ENCODE measurements at regions of chr7 and their contacts with region 1.

Region 1: GRCh38 chr7:129091484-129092002 is 36.6 kb upstream of the TNPO3 start:
- DNase-seq: peak; percentile 67 to 77
- ATAC-seq: peak; percentile 96 to 99
- H3K4me3 ChIP-seq: no peak overlapping the region
- H3K27ac ChIP-seq: no peak overlapping the region
- H3K4me1 ChIP-seq: no peaks in the 10 kb centered on the region
- CTCF ChIP-seq: peak; percentile 96
- EP300 ChIP-seq: no peak
- POLR2A ChIP-seq: no peak
- RAD21 ChIP-seq: peak; percentile 95 to 96

Region 2: GRCh38 chr7:128904381-128905197 is 187.0 kb before region 1 on chr7:
- CTCF ChIA-PET with region 1: interaction called, 28 read pairs
- POLR2A ChIA-PET with region 1: no interaction called
- DNase-seq: peak; percentile 56 to 60
- ATAC-seq: peak; percentile 33 to 82; a peak in 5 of 6 replicates
- H3K4me3 ChIP-seq: no peak overlapping the region
- H3K27ac ChIP-seq: no peak overlapping the region
- H3K4me1 ChIP-seq: peaks cover 16% of the 10 kb centered on the region; the same call in 1 of the 3 replicates
- CTCF ChIP-seq: peak; percentile 65
- EP300 ChIP-seq: no peak
- POLR2A ChIP-seq: no peak
- RAD21 ChIP-seq: peak; percentile 52 to 66

Region 3: DNA sequence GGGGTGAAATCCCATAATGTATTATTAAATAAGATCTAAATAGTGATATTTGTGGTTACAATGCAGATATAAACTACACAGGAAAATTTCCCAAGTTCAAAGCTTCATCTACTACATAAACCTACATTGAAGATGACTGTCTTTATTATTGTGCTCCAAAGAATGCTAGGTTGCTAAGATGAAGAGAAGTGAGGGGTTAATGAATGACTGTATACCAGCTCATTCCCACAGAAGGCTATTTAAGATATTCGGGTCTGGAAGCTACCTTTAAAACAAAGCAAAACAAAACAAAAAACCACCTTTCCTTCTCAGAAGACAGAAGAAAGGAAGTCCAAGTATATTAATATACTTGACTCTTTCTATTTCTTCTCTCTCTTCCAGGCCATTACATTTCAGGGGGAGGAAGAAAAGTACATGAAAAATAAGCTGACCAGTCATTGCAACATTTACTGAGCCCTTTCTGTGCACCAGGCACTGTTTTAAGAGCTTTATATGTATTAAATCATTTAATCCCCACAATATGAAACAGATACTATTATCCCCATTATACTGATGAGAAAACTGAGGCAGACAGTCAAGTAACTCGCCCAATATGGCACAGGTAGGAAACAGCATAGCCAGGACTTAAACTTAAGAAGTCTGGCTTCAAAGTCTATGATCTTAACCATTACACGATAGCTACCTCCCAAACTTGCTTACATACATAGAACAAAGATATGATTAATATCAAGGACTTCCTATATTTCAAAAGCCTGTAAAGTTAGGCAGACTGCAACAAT is 84.7 kb before region 1 on chr7:
- CTCF ChIA-PET with region 1: interaction called, 12 read pairs
- POLR2A ChIA-PET with region 1: no interaction called
- DNase-seq: no peak
- ATAC-seq: no peak
- H3K4me3 ChIP-seq: no peak overlapping the region
- H3K27ac ChIP-seq: no peak overlapping the region
- H3K4me1 ChIP-seq: no peaks in the 10 kb centered on the region
- CTCF ChIP-seq: no peak
- EP300 ChIP-seq: no peak
- POLR2A ChIP-seq: no peak
- RAD21 ChIP-seq: no peak

Region 4: GRCh38 chr7:129066290-129067131 is 25.0 kb before region 1 on chr7:
- CTCF ChIA-PET with region 1: interaction called, 26 read pairs
- POLR2A ChIA-PET with region 1: no interaction called
- DNase-seq: peak; percentile 26 to 43
- ATAC-seq: peak; percentile 83 to 85
- H3K4me3 ChIP-seq: no peak overlapping the region
- H3K27ac ChIP-seq: peak overlapping the region; percentile 3 to 67; a peak in 4 of 6 replicates
- H3K4me1 ChIP-seq: peaks cover 14% of the 10 kb centered on the region
- CTCF ChIP-seq: no peak
- EP300 ChIP-seq: no peak
- POLR2A ChIP-seq: no peak
- RAD21 ChIP-seq: no peak

Region 5: DNA sequence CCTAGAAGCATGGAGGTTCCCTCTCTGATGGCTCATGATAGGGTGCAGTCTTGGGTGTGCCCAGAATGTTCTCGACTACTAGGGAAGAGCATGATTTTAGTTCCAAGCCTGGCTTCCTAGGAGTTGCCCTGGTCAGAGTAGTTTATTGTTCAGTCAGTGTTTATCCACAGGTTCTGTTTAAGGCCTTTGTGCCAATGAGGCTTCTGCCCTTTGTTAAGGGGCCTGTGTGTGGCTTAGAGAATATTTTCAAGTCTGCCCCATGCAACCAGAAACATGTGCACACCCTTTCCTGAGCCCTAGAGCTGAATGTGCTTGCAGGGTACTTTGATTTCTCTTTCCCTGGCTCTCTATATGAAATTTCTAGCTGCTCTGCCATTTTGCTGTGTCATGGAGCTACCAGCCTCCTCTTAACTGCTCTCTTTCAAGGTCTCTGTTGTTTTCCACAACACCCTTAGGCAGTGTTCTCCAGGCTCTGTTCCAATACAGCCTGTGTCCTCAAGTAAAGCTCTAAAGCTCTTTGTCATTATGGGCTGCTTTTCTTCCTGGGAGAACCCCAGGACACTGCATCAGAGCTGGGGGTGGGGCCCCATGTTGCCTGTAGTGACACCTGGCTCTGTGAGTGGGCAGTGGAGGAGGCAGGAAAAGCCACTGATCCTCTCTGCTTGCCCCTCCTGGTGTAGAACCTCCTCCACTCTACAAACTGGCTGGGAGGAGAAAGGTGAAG is 18.9 kb after region 1 on chr7:
- CTCF ChIA-PET with region 1: interaction called, 54 read pairs
- POLR2A ChIA-PET with region 1: no interaction called
- DNase-seq: peak in 1 of 2 experiments; percentile 29
- ATAC-seq: peak; percentile 43 to 60; a peak in 4 of 6 replicates
- H3K4me3 ChIP-seq: no peak overlapping the region
- H3K27ac ChIP-seq: peak overlapping the region; percentile 12 to 66
- H3K4me1 ChIP-seq: peaks cover 9% of the 10 kb centered on the region
- CTCF ChIP-seq: no peak
- EP300 ChIP-seq: no peak
- POLR2A ChIP-seq: no peak
- RAD21 ChIP-seq: no peak

Region 6: DNA sequence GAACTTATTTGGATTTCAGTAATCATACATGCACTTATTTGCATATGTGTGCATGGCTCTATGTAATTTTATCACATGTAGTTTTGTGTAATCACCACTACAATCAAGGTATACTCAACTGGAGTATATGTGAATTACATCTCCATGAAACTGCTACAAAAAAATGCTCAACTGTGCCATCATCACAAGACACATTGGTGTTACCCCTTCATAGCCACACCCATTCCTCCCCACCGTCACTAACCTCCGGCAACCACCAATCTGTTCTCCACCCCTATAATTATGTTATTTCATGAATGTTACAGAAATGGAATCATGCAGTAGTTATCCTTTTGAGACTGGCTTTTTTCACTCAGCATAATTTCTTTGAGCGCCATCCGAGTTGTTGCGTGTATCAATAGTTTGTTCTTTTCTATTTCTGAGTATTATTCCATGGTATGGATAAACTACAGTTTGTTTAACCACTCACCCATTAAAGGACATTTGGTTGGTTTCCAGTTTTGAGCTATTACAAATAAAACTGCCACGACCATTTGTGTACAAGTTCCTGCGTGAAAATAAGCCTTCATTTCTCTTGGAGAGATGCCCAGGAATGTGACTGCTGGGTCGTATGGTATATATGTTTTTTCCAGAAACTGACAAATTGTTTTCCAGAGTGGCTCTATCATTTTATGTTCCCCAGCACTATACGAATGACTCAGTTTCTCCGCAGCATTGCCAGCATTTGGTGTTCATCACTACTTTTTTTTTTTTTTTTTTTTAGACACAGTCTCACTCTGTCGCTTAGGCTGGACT is 85.6 kb after region 1 on chr7:
- CTCF ChIA-PET with region 1: no interaction called
- POLR2A ChIA-PET with region 1: no interaction called
- DNase-seq: no peak
- ATAC-seq: peak; percentile 54 to 55; a peak in 4 of 6 replicates
- H3K4me3 ChIP-seq: no peak overlapping the region
- H3K27ac ChIP-seq: no peak overlapping the region
- H3K4me1 ChIP-seq: no peaks in the 10 kb centered on the region
- CTCF ChIP-seq: no peak
- EP300 ChIP-seq: no peak
- POLR2A ChIP-seq: no peak
- RAD21 ChIP-seq: no peak

Region 7: GRCh38 chr7:129240119-129240815 is 148.7 kb after region 1 on chr7:
- CTCF ChIA-PET with region 1: no interaction called
- POLR2A ChIA-PET with region 1: no interaction called
- DNase-seq: no peak
- ATAC-seq: no peak
- H3K4me3 ChIP-seq: no peak overlapping the region
- H3K27ac ChIP-seq: no peak overlapping the region
- H3K4me1 ChIP-seq: no peaks in the 10 kb centered on the region
- CTCF ChIP-seq: no peak
- EP300 ChIP-seq: no peak
- POLR2A ChIP-seq: no peak
- RAD21 ChIP-seq: no peak